Body of pancreas (tissue), 4 donors: ENCODE measurements at regions of chr5 and their contacts with region 1.

Region 1: GRCh38 chr5:141691867-141692532 is 10.0 kb upstream of the ARAP3 start:
- DNase-seq: peak; percentile 85 to 90 (median 88)
- ATAC-seq: peak; percentile 95
- H3K4me3 ChIP-seq: no peak overlapping the region
- H3K27ac ChIP-seq: no peak overlapping the region
- H3K4me1 ChIP-seq: peaks cover 14% of the 10 kb centered on the region
- H3K27me3 ChIP-seq: no peaks in the 10 kb centered on the region
- CTCF ChIP-seq: peak; percentile 97 to 99 (median 98)
- POLR2A ChIP-seq: no peak

Region 2: GRCh38 chr5:141958113-141958512 is 266.1 kb after region 1 on chr5 and contains the start of gene PCDH12:
- intact Hi-C with region 1: loop called (anchors 5 kb)
- DNase-seq: no peak
- ATAC-seq: no peak
- H3K4me3 ChIP-seq: no peak within 1 kb of the TSS
- H3K27ac ChIP-seq: peak within 1 kb of the TSS in 1 of 4 donors; percentile 4
- H3K4me1 ChIP-seq: no peaks in the 10 kb centered on the region
- H3K27me3 ChIP-seq: no peaks in the 10 kb centered on the region
- CTCF ChIP-seq: no peak
- POLR2A ChIP-seq: peak in 1 of 3 donors; percentile 18
- total RNA-seq, gene PCDH12: 1.6 to 2.9 TPM